ENCODE measurements at regions of chr14 and their contacts with region 1.

Region 1: DNA sequence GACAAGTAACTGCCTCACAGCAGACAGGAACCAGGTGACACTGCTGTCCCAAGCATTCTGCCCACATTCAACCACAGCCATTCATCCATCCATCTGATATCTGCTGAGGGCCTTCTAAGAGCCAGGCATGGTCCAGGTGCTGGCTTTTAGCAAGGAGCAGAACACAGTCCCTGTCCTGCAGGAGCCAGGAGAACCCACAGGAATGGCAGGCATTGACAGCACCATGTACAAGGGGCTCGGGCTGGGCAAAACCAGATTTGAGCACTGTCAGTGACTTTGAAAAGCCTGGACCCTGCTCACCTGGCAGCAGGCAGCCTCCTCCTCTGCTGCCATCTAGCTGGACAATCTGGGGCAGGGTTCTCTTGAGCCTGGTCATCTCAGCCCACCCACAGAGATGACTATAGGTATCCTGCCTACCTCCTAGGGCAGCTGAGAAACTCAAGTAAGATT is 136.9 kb downstream of the ZFP36L1 start:
- DNase-seq: peak in 1 of 2 experiments; percentile 42
- H3K4me3 ChIP-seq: no peak overlapping the region
- H3K27ac ChIP-seq: no peak overlapping the region
- H3K4me1 ChIP-seq: peaks cover 0 to 2% (median 0%) of the 10 kb centered on the region in 4 experiments; a peak in 1 of 7 replicates
- H3K27me3 ChIP-seq: no peaks in the 10 kb centered on the region; a peak in 1 of 7 replicates
- CTCF ChIP-seq: peak; percentile 24 to 47 (median 36)
- EP300 ChIP-seq: no peak
- POLR2A ChIP-seq: no peak
- RAD21 ChIP-seq: peak; percentile 50 to 70

Region 2: GRCh38 chr14:68682166-68683103 is 26.5 kb after region 1 on chr14:
- CTCF ChIA-PET with region 1: interaction called, 11 read pairs
- POLR2A ChIA-PET with region 1: interaction called, 3 read pairs
- DNase-seq: no peak
- H3K4me3 ChIP-seq: no peak overlapping the region
- H3K27ac ChIP-seq: no peak overlapping the region
- H3K4me1 ChIP-seq: peaks cover 0 to 7% (median 4%) of the 10 kb centered on the region in 4 experiments; a peak in 2 of 7 replicates
- H3K27me3 ChIP-seq: 0 out of 7 replicates have a peak, but pooled peaks cover 0 to 2% (median 0%) of the 10 kb centered on the region in 4 experiments
- CTCF ChIP-seq: no peak
- EP300 ChIP-seq: no peak
- POLR2A ChIP-seq: no peak
- RAD21 ChIP-seq: no peak

Measured in H1 (cell line).